IMR-90 (cell line): ENCODE measurements at regions of chr9 and their contacts with region 1.

Region 1: GRCh38 chr9:20941174-20941690 is 90.2 kb downstream of the HACD4 start:
- DNase-seq: peak; percentile 71
- ATAC-seq: peak; percentile 95
- H3K4me3 ChIP-seq: no peak overlapping the region
- H3K27ac ChIP-seq: no peak overlapping the region
- H3K4me1 ChIP-seq: no peaks in the 10 kb centered on the region
- H3K27me3 ChIP-seq: no peaks in the 10 kb centered on the region
- CTCF ChIP-seq: peak; percentile 88
- POLR2A ChIP-seq: no peak
- RAD21 ChIP-seq: peak; percentile 91

Region 2: GRCh38 chr9:20437476-20437875 is 503.8 kb before region 1 on chr9:
- CTCF ChIA-PET with region 1: no interaction called
- POLR2A ChIA-PET with region 1: no interaction called
- dilution Hi-C with region 1: no loop called
- in situ Hi-C with region 1: no loop called
- intact Hi-C with region 1: loop called (anchors 10 kb)
- DNase-seq: peak; percentile 58
- ATAC-seq: peak; percentile 49
- H3K4me3 ChIP-seq: no peak overlapping the region
- H3K27ac ChIP-seq: no peak overlapping the region
- H3K4me1 ChIP-seq: peaks cover 3% of the 10 kb centered on the region
- H3K27me3 ChIP-seq: no peaks in the 10 kb centered on the region; the same call in 1 of the 2 replicates
- CTCF ChIP-seq: no peak
- POLR2A ChIP-seq: no peak
- RAD21 ChIP-seq: no peak

Region 3: GRCh38 chr9:20552874-20553575 is 388.2 kb before region 1 on chr9:
- CTCF ChIA-PET with region 1: no interaction called
- POLR2A ChIA-PET with region 1: no interaction called
- dilution Hi-C with region 1: no loop called
- in situ Hi-C with region 1: no loop called
- intact Hi-C with region 1: loop called (anchors 5 kb)
- DNase-seq: peak; percentile 25
- ATAC-seq: peak; percentile 46
- H3K4me3 ChIP-seq: no peak overlapping the region
- H3K27ac ChIP-seq: no peak overlapping the region
- H3K4me1 ChIP-seq: peaks cover 7% of the 10 kb centered on the region
- H3K27me3 ChIP-seq: no peaks in the 10 kb centered on the region
- CTCF ChIP-seq: peak; percentile 36
- POLR2A ChIP-seq: no peak
- RAD21 ChIP-seq: no peak

Region 4: DNA sequence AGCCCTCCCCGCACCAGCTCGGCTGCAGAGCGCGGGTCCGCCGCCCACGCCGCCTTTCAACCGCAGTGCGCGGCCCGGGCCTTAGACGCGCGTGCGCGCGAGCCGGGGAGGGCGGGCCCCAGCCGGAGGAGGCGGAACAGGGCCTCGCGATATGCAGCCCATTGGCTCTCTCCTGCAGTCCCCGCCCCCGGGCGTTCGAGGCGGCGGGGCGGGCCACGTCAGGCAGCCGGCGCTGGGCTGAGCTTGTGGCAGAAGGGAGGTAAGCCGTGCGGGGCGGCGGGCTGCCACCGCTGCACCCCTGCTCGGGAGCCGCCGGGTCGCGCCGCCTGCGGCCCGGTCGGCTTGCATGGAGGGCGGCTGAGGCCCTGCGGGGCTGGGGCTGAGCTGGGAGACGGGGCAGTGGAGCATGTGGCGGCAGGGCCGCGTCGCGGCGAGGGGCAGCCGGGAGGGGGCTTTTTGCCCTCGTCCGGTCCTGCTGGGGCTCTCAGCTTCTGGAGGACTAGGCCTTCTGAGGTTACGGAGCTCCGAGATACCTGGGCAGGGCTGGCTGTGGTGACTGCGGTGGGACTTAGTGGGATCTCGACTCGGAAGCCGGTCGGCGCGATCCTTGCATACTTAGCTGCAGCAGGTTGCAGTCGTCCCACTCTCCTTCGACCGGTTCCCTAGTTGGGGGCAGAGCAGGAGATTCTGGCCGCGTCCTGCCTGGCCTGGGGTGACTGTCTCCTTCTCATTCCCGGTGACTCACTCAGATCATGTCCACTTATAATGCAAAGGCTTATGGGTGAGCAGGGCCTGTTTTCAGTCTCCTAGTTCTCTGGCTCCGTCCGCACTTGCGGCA is 257.0 kb before region 1 on chr9 and contains the start of gene FOCAD:
- CTCF ChIA-PET with region 1: interaction called, 6 read pairs
- POLR2A ChIA-PET with region 1: no interaction called
- dilution Hi-C with region 1: no loop called
- in situ Hi-C with region 1: no loop called
- intact Hi-C with region 1: loop called (anchors 1 kb)
- DNase-seq: peak; percentile 92
- ATAC-seq: peak; percentile 99
- H3K4me3 ChIP-seq: peak within 1 kb of the TSS; percentile 60
- H3K27ac ChIP-seq: peak within 1 kb of the TSS; percentile 61
- H3K4me1 ChIP-seq: 0 out of 2 replicates have a peak, but pooled peaks cover under 1% of the 10 kb centered on the region
- H3K27me3 ChIP-seq: no peaks in the 10 kb centered on the region
- CTCF ChIP-seq: no peak
- POLR2A ChIP-seq: peak; percentile 95
- RAD21 ChIP-seq: no peak
- total RNA-seq, gene FOCAD: 73.9 and 91.2 TPM in 2 replicates